CD14-positive monocyte (primary cell): ENCODE measurements at regions of chrX and their contacts with region 1.

Region 1: DNA sequence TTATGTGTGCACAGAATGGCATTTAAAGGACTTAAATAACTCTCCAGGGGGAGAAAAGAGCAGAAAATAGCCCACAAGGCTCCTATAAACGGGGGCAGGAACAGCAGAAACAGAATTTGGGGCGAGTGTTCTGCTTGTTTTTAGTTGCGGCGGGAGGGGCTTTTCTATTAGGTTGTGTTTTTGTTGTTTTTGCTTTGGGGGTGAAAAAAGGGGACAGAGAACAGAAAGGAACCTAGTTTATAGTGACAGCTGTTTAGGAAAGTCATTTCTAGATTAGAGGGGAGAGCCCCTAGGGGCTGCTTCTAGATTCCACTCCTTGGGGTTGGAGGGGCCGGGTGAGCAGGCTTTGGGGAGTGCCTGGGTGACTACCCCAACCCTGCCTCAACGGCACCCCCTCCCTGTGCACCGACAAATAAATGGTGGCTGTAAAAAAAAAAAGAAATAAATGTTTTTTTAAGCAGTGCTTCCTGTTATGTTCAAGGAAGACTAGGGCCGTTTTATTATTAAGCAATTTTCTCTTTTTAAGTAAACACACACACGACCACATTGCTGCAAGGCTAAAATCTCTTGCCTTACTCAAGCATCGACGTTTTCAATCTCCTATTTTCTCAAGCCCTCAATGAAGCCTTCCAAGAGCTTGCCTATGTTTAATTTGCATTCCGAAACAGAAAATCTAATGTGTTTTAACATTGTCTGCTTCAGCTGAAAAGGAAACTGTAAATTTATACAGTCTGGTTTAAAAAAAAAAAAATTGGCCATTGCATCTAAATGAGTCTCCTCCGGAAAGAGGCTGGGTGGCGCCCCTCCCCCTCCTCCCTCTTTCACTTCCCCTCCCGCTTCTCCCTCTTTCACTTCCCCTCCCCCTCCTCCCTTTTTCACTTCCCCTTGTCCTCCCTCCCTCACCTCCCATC is 123.3 kb upstream of the TBL1X start:
- DNase-seq: peak; percentile 76 to 86 (median 85)
- H3K4me3 ChIP-seq: peak overlapping the region; percentile 31 to 75 (median 67)
- H3K4me3 Mint-ChIP-seq: peak overlapping the region; percentile 72 to 87
- H3K27ac ChIP-seq: peak overlapping the region; percentile 93 to 94
- H3K27ac Mint-ChIP-seq: peak overlapping the region; percentile 94 to 99 (median 97)
- H3K4me1 ChIP-seq: peaks cover 41 to 55% of the 10 kb centered on the region in 2 donors
- H3K4me1 Mint-ChIP-seq: peaks cover 42% of the 10 kb centered on the region
- H3K27me3 ChIP-seq: no peaks in the 10 kb centered on the region
- H3K27me3 Mint-ChIP-seq: peaks cover 0 to 10% (median 2%) of the 10 kb centered on the region in 3 donors
- CTCF ChIP-seq: no peak

Region 2: GRCh38 chrX:9456250-9457074 is 114.9 kb after region 1 on chrX:
- intact Hi-C with region 1: loop called in 1 of 2 experiments (anchors 2 kb)
- DNase-seq: peak; percentile 66 to 77 (median 66)
- H3K4me3 ChIP-seq: no peak overlapping the region
- H3K4me3 Mint-ChIP-seq: no peak overlapping the region
- H3K27ac ChIP-seq: peak overlapping the region; percentile 77 to 83
- H3K27ac Mint-ChIP-seq: peak overlapping the region; percentile 92 to 96 (median 94)
- H3K4me1 ChIP-seq: peaks cover 34 to 48% of the 10 kb centered on the region in 2 donors
- H3K4me1 Mint-ChIP-seq: peaks cover 34% of the 10 kb centered on the region
- H3K27me3 ChIP-seq: peaks cover 0 to 7% of the 10 kb centered on the region in 2 donors
- H3K27me3 Mint-ChIP-seq: peaks cover 0 to 22% (median 0%) of the 10 kb centered on the region in 3 donors
- CTCF ChIP-seq: no peak

Region 3: GRCh38 chrX:9464435-9465371 is 123.2 kb after region 1 on chrX and contains the start of gene TBL1X:
- intact Hi-C with region 1: loop called (anchors 2 kb)
- DNase-seq: peak in 1 of 3 donors; percentile 11
- H3K4me3 ChIP-seq: peak within 1 kb of the TSS; percentile 82 to 84 (median 83)
- H3K4me3 Mint-ChIP-seq: peak within 1 kb of the TSS; percentile 79 to 87
- H3K27ac ChIP-seq: peak within 1 kb of the TSS; percentile 65 to 79
- H3K27ac Mint-ChIP-seq: peak within 1 kb of the TSS; percentile 85 to 96 (median 90)
- H3K4me1 ChIP-seq: peaks cover 38 to 64% of the 10 kb centered on the region in 2 donors
- H3K4me1 Mint-ChIP-seq: peaks cover 45% of the 10 kb centered on the region
- H3K27me3 ChIP-seq: peaks cover 0 to 19% of the 10 kb centered on the region in 2 donors
- H3K27me3 Mint-ChIP-seq: peaks cover 1 to 42% (median 2%) of the 10 kb centered on the region in 3 donors
- CTCF ChIP-seq: no peak
- polyA plus RNA-seq, gene TBL1X: 12.5 to 19.5 (median 13.8) TPM